GM10248 (cell line): ENCODE measurements at regions of chr4 and their contacts with region 1.

Region 1: DNA sequence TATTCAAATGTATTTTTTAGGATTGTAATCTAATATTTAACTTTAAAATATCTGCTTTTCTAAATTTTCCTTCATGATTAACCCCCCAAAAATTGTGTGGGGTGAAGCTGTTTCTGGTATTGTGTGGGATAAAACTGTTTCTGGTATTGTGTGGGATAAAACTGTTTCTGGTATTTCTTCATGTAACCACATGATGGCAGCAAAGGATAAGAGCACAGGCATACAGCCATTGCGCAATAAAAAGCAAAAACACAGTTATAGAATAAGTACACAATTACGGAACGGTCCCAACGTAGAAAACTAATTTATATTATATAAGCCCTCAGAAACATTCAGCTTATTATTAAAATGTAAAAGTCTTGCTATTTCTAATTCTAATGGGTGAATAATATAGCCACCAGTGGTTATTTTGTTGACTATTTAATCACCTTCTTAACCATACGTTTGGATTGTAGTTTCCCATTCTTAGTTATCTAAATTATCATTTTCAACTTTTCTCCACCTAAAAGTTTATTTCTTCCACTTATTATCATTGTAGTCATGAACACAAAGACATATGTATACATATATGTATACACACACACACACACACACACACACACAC is 333.9 kb upstream of the FSTL5 start:
- DNase-seq: peak; percentile 33
- CTCF ChIP-seq: peak; percentile 62

Region 2: DNA sequence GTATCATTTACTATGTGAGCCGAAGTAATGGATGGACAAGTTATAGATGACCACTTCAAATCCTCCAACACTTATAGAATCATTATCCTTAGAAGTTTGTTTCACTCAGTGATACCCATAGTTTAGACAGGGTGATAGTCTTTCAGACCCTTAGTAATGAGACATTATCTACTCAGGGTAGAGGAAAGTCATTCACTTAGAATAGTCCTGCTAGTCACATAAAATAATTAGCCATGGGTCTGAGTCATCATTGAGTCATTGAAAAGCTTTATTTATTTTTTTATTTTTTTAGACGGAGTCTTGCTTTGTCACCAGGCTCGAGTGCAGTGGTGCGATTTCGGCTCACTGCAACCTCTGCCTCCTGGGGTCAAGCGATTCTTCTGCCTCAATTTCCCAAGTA is 12.2 kb before region 1 on chr4:
- CTCF ChIA-PET with region 1: interaction called, 13 read pairs
- POLR2A ChIA-PET with region 1: no interaction called
- DNase-seq: no peak
- CTCF ChIP-seq: no peak

Region 3: GRCh38 chr4:162522724-162523123 is 25.1 kb after region 1 on chr4:
- CTCF ChIA-PET with region 1: no interaction called
- POLR2A ChIA-PET with region 1: no interaction called
- DNase-seq: no peak
- CTCF ChIP-seq: no peak

Region 4: GRCh38 chr4:163042306-163042705 is 544.6 kb after region 1 on chr4:
- CTCF ChIA-PET with region 1: interaction called, 32 read pairs
- POLR2A ChIA-PET with region 1: no interaction called
- DNase-seq: no peak
- CTCF ChIP-seq: no peak

Region 5: GRCh38 chr4:163332500-163333406 is 835.1 kb after region 1 on chr4 and contains the start of gene NPY1R:
- CTCF ChIA-PET with region 1: interaction called, 12 read pairs
- POLR2A ChIA-PET with region 1: no interaction called
- DNase-seq: peak; percentile 60
- CTCF ChIP-seq: peak; percentile 52